ENCODE measurements at regions of chr2 and their contacts with region 1.

Region 1: DNA sequence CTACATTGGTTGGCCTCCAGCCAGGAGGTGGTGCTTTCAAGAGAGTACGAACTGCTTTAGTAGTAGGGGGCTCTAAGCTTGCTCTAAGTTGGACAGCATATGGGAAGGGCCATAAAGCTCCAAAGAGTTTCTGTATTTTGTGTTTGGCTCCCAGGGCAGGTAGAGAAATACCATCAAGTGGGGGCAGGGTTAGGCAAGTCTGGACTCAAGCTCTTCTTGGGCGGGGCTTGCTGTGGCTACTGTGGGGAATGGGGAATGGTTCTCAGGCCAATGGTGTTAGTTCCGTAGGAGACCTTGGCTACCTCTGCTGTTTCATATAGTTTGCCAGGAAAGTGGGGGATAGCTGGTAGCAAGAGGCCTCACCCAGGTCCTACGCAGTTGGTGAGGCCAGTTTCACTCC is 372.1 kb downstream of the ARL6IP6 start:
- DNase-seq: no peak
- ATAC-seq: no peak
- H3K4me3 Mint-ChIP-seq: no peak overlapping the region
- H3K27ac Mint-ChIP-seq: no peak overlapping the region
- H3K4me1 Mint-ChIP-seq: no peaks in the 10 kb centered on the region
- H3K27me3 Mint-ChIP-seq: no peaks in the 10 kb centered on the region
- CTCF ChIP-seq: no peak

Region 2: GRCh38 chr2:152047819-152048471 is 1042.6 kb before region 1 on chr2:
- CTCF ChIA-PET with region 1: no interaction called
- POLR2A ChIA-PET with region 1: no interaction called
- intact Hi-C with region 1: no loop called
- DNase-seq: no peak
- ATAC-seq: no peak
- H3K4me3 Mint-ChIP-seq: no peak overlapping the region
- H3K27ac Mint-ChIP-seq: no peak overlapping the region
- H3K4me1 Mint-ChIP-seq: peaks cover 21% of the 10 kb centered on the region
- H3K27me3 Mint-ChIP-seq: no peaks in the 10 kb centered on the region
- CTCF ChIP-seq: no peak

Region 3: GRCh38 chr2:153179808-153180207 is 89.2 kb after region 1 on chr2:
- CTCF ChIA-PET with region 1: no interaction called
- POLR2A ChIA-PET with region 1: no interaction called
- intact Hi-C with region 1: no loop called
- DNase-seq: no peak
- ATAC-seq: no peak
- H3K4me3 Mint-ChIP-seq: no peak overlapping the region
- H3K27ac Mint-ChIP-seq: no peak overlapping the region
- H3K4me1 Mint-ChIP-seq: no peaks in the 10 kb centered on the region
- H3K27me3 Mint-ChIP-seq: no peaks in the 10 kb centered on the region
- CTCF ChIP-seq: no peak

Region 4: GRCh38 chr2:154267983-154268382 is 1177.4 kb after region 1 on chr2:
- CTCF ChIA-PET with region 1: no interaction called
- POLR2A ChIA-PET with region 1: no interaction called
- intact Hi-C with region 1: loop called (anchors 5 kb)
- DNase-seq: no peak
- ATAC-seq: no peak
- H3K4me3 Mint-ChIP-seq: no peak overlapping the region
- H3K27ac Mint-ChIP-seq: no peak overlapping the region
- H3K4me1 Mint-ChIP-seq: no peaks in the 10 kb centered on the region
- H3K27me3 Mint-ChIP-seq: no peaks in the 10 kb centered on the region
- CTCF ChIP-seq: no peak